ENCODE measurements at regions of chr4 and their contacts with region 1.

Region 1: DNA sequence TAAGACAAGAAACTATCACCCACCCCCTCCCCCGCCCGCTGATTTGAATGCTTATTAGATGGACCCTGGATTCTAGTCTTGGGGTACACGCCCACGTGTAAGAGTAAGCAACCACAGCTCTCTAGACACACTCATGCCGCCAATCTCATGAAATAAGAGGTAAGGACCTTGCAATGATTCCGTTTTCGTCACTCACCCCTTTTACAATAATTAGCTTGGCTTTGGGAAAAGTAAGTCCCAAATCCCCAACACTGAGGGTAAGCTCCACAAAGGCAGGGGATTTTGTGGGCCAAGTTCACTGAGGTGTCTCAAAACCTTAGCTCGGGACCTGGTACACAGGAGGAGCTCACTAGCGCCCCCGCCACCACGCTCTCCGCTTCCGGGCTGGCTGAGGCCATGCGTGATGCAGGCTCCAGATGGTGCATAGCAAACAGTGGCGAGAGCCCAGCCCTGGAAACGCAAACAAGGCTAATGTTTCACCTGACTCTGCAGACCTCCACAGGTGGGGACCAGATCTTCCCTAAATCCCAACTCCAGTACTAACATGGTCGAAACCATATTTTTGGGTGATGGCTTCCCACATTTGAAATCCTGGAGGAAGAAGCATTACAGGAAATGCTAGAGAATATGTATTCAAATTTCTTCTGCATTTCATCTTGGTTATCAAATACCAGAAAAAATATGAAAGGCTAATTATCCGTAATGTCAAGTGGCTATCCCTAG is 4.1 kb downstream of the PLAC8 start:
- DNase-seq: peak; percentile 75 to 80
- H3K4me3 ChIP-seq: peak overlapping the region; percentile 62
- H3K27ac ChIP-seq: peak overlapping the region; percentile 75
- H3K4me1 ChIP-seq: peaks cover 38% of the 10 kb centered on the region
- H3K27me3 ChIP-seq: no peaks in the 10 kb centered on the region
- CTCF ChIP-seq: peak; percentile 64

Region 2: GRCh38 chr4:83067058-83067639 is 43.2 kb before region 1 on chr4:
- CTCF ChIA-PET with region 1: no interaction called
- POLR2A ChIA-PET with region 1: interaction called, 10 read pairs
- intact Hi-C with region 1: no loop called
- DNase-seq: peak; percentile 34 to 69
- H3K4me3 ChIP-seq: no peak overlapping the region
- H3K27ac ChIP-seq: peak overlapping the region; percentile 12; the same call in 1 of the 2 replicates
- H3K4me1 ChIP-seq: peaks cover 15% of the 10 kb centered on the region
- H3K27me3 ChIP-seq: no peaks in the 10 kb centered on the region
- CTCF ChIP-seq: no peak

Region 3: GRCh38 chr4:83128240-83128929 is 18.0 kb after region 1 on chr4:
- CTCF ChIA-PET with region 1: interaction called, 6 read pairs
- POLR2A ChIA-PET with region 1: interaction called, 11 read pairs
- intact Hi-C with region 1: no loop called
- DNase-seq: peak; percentile 11 to 84
- H3K4me3 ChIP-seq: no peak overlapping the region
- H3K27ac ChIP-seq: no peak overlapping the region; the same call in none of the 2 replicates
- H3K4me1 ChIP-seq: peaks cover 9% of the 10 kb centered on the region
- H3K27me3 ChIP-seq: no peaks in the 10 kb centered on the region
- CTCF ChIP-seq: no peak

Region 4: GRCh38 chr4:83212041-83212851 is 101.9 kb after region 1 on chr4:
- CTCF ChIA-PET with region 1: interaction called, 3 read pairs
- POLR2A ChIA-PET with region 1: interaction called, 5 read pairs
- intact Hi-C with region 1: loop called (anchors 1 kb)
- DNase-seq: peak; percentile 44 to 76
- H3K4me3 ChIP-seq: no peak overlapping the region
- H3K27ac ChIP-seq: peak overlapping the region; percentile 51
- H3K4me1 ChIP-seq: peaks cover 39% of the 10 kb centered on the region
- H3K27me3 ChIP-seq: no peaks in the 10 kb centered on the region
- CTCF ChIP-seq: no peak

Region 5: GRCh38 chr4:83261307-83261706 is 150.9 kb after region 1 on chr4:
- CTCF ChIA-PET with region 1: interaction called, 4 read pairs
- POLR2A ChIA-PET with region 1: no interaction called
- intact Hi-C with region 1: loop called (anchors 2 kb)
- DNase-seq: no peak
- H3K4me3 ChIP-seq: no peak overlapping the region
- H3K27ac ChIP-seq: no peak overlapping the region
- H3K4me1 ChIP-seq: peaks cover 17% of the 10 kb centered on the region
- H3K27me3 ChIP-seq: no peaks in the 10 kb centered on the region
- CTCF ChIP-seq: no peak

Region 6: DNA sequence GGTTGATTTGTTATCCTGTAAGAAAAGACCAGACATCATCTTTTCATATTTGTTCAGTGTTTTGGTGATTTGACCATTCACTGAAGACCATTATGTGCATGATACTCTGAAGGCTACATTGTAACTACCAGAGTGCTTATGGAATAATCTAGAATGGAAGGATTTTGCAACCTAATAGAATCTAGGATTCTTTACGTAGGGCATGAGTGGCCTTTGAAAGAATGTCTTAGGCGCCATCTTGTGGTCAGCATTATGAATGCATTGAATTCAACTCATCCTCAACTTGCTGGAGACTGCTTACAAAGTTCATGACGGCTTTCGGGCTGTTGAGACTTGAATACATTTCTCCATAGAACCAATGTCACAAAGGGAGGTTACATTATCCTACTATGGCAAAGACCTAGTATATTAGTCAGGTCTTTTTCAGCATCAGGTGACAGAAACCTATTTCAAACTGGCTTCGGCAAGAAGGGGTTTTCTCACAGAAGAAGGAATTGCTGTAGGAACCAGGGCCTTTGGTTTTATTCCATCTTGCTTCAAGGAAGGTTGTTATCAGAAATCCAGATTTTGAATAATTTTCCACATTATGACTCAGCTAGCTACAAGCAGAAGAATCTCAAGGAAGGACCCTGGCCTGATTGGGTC is 529.6 kb after region 1 on chr4:
- CTCF ChIA-PET with region 1: no interaction called
- POLR2A ChIA-PET with region 1: no interaction called
- intact Hi-C with region 1: no loop called
- DNase-seq: peak; percentile 36 to 56
- H3K4me3 ChIP-seq: no peak overlapping the region
- H3K27ac ChIP-seq: no peak overlapping the region
- H3K4me1 ChIP-seq: no peaks in the 10 kb centered on the region
- H3K27me3 ChIP-seq: no peaks in the 10 kb centered on the region
- CTCF ChIP-seq: peak; percentile 83